PC-9 (cell line): ENCODE measurements at regions of chr20 and their contacts with region 1.

Region 1: GRCh38 chr20:30286162-30286561 is 971.3 kb upstream of the DEFB115 start:
- DNase-seq: no peak
- H3K4me3 ChIP-seq: no peak overlapping the region
- H3K27ac ChIP-seq: no peak overlapping the region
- H3K4me1 ChIP-seq: no peaks in the 10 kb centered on the region
- H3K27me3 ChIP-seq: no peaks in the 10 kb centered on the region
- CTCF ChIP-seq: no peak

Region 2: DNA sequence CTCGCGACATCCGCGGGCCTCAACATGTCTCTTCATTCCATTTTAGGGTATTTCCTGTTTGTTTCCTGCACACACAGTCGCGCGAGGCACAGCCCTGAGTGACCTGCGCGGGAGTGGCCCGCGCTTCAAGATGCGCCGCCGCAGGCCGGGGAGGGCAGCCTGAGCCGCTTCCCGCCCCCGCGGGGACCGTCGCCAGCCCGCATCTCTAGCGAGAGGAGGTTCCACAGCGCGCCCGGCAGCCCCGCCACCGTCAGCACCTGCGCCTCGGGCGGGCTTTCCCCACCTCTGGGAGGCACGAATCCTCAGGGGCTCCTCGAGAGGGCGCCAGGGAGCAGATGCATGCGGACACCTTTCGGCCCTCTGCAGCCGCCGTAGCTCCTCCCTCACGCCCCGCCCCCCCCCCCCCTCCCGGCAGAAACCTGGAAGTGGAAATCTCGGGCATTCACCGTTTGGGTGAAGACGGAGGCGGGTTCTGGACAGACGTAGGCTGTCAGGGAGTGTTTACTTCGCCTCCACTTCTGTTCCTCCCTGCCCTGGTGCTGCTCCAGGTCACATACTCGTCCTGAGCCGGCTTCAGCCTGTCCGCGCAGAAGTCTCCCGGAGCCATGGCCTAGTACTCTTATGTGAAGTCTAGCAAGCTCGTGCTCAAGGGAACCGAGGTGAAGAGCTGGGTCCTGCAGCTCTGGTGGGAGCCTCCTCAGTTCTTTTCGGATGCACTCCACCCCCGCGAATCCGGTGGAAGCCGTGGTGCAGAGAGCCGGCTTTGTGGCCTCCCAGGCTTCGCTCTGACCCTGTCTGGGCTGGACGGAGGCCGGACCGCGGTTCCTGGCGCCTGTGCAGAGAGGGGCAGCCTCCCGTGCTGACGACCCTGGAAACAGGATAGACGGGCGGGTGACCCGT is 90.9 kb after region 1 on chr20:
- CTCF ChIA-PET with region 1: interaction called, 13 read pairs
- POLR2A ChIA-PET with region 1: no interaction called
- intact Hi-C with region 1: no loop called
- DNase-seq: peak; percentile 75 to 89
- H3K4me3 ChIP-seq: peak overlapping the region; percentile 74
- H3K27ac ChIP-seq: peak overlapping the region; percentile 55
- H3K4me1 ChIP-seq: no peaks in the 10 kb centered on the region; the same call in 1 of the 2 replicates
- H3K27me3 ChIP-seq: no peaks in the 10 kb centered on the region
- CTCF ChIP-seq: peak; percentile 74